ENCODE measurements at regions of chr19 and their contacts with region 1.

Region 1: DNA sequence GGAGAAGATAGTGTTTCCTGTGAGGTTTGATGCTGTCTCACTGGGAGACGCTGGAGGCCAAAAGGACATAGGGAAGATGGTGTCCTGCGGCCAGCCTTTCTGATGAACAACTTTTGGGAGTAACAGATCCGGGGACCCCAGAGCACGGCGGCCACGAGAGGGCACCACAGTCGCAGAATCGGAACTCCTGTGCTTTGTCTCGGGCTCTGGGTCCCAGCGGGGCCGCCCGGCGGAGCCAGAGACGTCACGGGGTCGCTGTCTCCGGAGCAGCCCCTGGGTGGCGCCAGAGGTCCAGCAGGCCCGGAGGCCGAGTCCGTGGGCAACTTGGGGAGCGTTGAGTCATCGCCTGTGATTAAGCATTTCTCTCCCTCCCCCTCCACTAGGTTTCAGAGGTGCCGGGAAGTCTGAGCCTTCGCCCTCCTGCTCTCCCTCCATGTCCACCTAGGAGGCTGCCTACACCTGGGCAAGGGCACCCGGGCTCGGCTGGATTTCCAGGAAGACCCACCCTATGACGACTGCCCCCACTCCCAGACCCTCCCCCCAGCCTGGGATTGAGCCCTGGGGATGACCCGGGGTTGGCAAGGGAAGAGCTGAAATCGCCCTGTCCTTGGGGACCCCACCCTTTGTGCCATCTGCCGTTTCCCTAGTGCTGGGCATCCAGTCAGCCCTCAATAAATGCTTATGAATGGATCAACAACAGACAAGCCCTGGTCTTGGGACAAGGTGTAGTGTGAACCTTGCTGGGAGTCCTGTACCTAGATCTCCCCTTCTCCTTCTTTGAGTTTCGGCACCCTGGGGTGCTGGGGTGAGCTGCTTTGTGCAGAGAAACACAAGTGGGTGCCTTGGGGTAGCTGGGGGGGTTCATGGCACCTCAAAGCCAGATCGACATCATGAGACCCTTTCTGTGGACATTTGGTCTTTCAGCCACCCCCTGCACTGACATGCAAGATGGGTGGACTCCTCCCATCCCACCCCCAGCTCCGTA is 3.4 kb downstream of the NANOS3 start:
- DNase-seq: peak; percentile 90 to 100
- H3K4me3 ChIP-seq: peak overlapping the region in 3 of 4 experiments; percentile 10 to 48 (median 11); a peak in 3 of 8 replicates
- H3K27ac ChIP-seq: 0 out of 2 replicates have a peak overlapping the region, but pooled peaks have one; percentile 43
- H3K4me1 ChIP-seq: peaks cover 6 to 23% (median 16%) of the 10 kb centered on the region in 4 experiments
- H3K27me3 ChIP-seq: peaks cover 5 to 23% (median 12%) of the 10 kb centered on the region in 4 experiments
- CTCF ChIP-seq: peak; percentile 78 to 99 (median 99)
- EP300 ChIP-seq: peak in 1 of 2 experiments; percentile 80; a peak in 1 of 3 replicates
- POLR2A ChIP-seq: 0 out of 3 replicates have a peak, but pooled peaks of 1 of the 2 experiments have one; percentile 25
- RAD21 ChIP-seq: peak; percentile 98 to 99

Region 2: GRCh38 chr19:13839938-13840759 is 40.2 kb before region 1 on chr19:
- CTCF ChIA-PET with region 1: no interaction called
- POLR2A ChIA-PET with region 1: no interaction called
- DNase-seq: no peak
- H3K4me3 ChIP-seq: no peak overlapping the region
- H3K27ac ChIP-seq: no peak overlapping the region
- H3K4me1 ChIP-seq: peaks cover 0 to 34% (median 27%) of the 10 kb centered on the region in 4 experiments; a peak in 6 of 7 replicates
- H3K27me3 ChIP-seq: no peaks in the 10 kb centered on the region
- CTCF ChIP-seq: no peak
- EP300 ChIP-seq: no peak
- POLR2A ChIP-seq: no peak
- RAD21 ChIP-seq: no peak

Region 3: GRCh38 chr19:13892862-13893261 is 12.5 kb after region 1 on chr19:
- CTCF ChIA-PET with region 1: interaction called, 12 read pairs
- POLR2A ChIA-PET with region 1: interaction called, 3 read pairs
- DNase-seq: no peak
- H3K4me3 ChIP-seq: no peak overlapping the region
- H3K27ac ChIP-seq: no peak overlapping the region
- H3K4me1 ChIP-seq: no peaks in the 10 kb centered on the region
- H3K27me3 ChIP-seq: no peaks in the 10 kb centered on the region
- CTCF ChIP-seq: no peak
- EP300 ChIP-seq: no peak
- POLR2A ChIP-seq: no peak
- RAD21 ChIP-seq: no peak

Region 4: GRCh38 chr19:13932911-13933393 is 52.6 kb after region 1 on chr19:
- CTCF ChIA-PET with region 1: interaction called, 13 read pairs
- POLR2A ChIA-PET with region 1: interaction called, 9 read pairs
- DNase-seq: no peak
- H3K4me3 ChIP-seq: no peak overlapping the region
- H3K27ac ChIP-seq: no peak overlapping the region
- H3K4me1 ChIP-seq: peaks cover 3 to 35% (median 15%) of the 10 kb centered on the region in 4 experiments
- H3K27me3 ChIP-seq: peaks cover 0 to 2% (median 0%) of the 10 kb centered on the region in 4 experiments; a peak in 1 of 7 replicates
- CTCF ChIP-seq: no peak
- EP300 ChIP-seq: no peak
- POLR2A ChIP-seq: no peak
- RAD21 ChIP-seq: no peak

Region 5: GRCh38 chr19:13959962-13960862 is 79.9 kb after region 1 on chr19:
- CTCF ChIA-PET with region 1: interaction called, 22 read pairs
- POLR2A ChIA-PET with region 1: interaction called, 13 read pairs
- DNase-seq: peak in 1 of 2 experiments; percentile 73
- H3K4me3 ChIP-seq: no peak overlapping the region
- H3K27ac ChIP-seq: no peak overlapping the region; the same call in 1 of the 2 replicates
- H3K4me1 ChIP-seq: peaks cover 0 to 9% (median 4%) of the 10 kb centered on the region in 4 experiments; a peak in 4 of 7 replicates
- H3K27me3 ChIP-seq: peaks cover 0 to 4% (median 0%) of the 10 kb centered on the region in 4 experiments; a peak in 2 of 7 replicates
- CTCF ChIP-seq: peak; percentile 44 to 68 (median 60)
- EP300 ChIP-seq: no peak
- POLR2A ChIP-seq: no peak
- RAD21 ChIP-seq: peak; percentile 16 to 51; a peak in 3 of 4 replicates

Region 6: GRCh38 chr19:14059093-14059480 is 178.7 kb after region 1 on chr19:
- CTCF ChIA-PET with region 1: interaction called, 76 read pairs
- POLR2A ChIA-PET with region 1: interaction called, 6 read pairs
- DNase-seq: peak in 1 of 2 experiments; percentile 93
- H3K4me3 ChIP-seq: no peak overlapping the region
- H3K27ac ChIP-seq: no peak overlapping the region
- H3K4me1 ChIP-seq: peaks cover 0 to 10% (median 3%) of the 10 kb centered on the region in 4 experiments; a peak in 4 of 7 replicates
- H3K27me3 ChIP-seq: peaks cover 5 to 19% (median 14%) of the 10 kb centered on the region in 4 experiments
- CTCF ChIP-seq: peak; percentile 74 to 96 (median 83)
- EP300 ChIP-seq: no peak
- POLR2A ChIP-seq: no peak
- RAD21 ChIP-seq: peak; percentile 50 to 52; a peak in 3 of 4 replicates

Region 7: GRCh38 chr19:14081325-14082093 is 201.2 kb after region 1 on chr19:
- CTCF ChIA-PET with region 1: interaction called, 16 read pairs
- POLR2A ChIA-PET with region 1: no interaction called
- DNase-seq: peak; percentile 97 to 100
- H3K4me3 ChIP-seq: peak overlapping the region; percentile 63 to 77 (median 70)
- H3K27ac ChIP-seq: no peak overlapping the region
- H3K4me1 ChIP-seq: peaks cover 0 to 3% (median 0%) of the 10 kb centered on the region in 4 experiments; a peak in 1 of 7 replicates
- H3K27me3 ChIP-seq: peaks cover 0 to 4% (median 0%) of the 10 kb centered on the region in 4 experiments; a peak in 3 of 7 replicates
- CTCF ChIP-seq: no peak
- EP300 ChIP-seq: no peak
- POLR2A ChIP-seq: no peak
- RAD21 ChIP-seq: no peak

Measured in H1 (cell line).